Ovary (tissue), 10 donors: ENCODE measurements at regions of chr2 and their contacts with region 1.

Region 1: GRCh38 chr2:71226965-71227560 is at the start of gene PAIP2B:
- DNase-seq: peak; percentile 98 to 99 (median 99)
- H3K4me3 ChIP-seq: peak within 1 kb of the TSS; percentile 73
- H3K27ac ChIP-seq: peak within 1 kb of the TSS; percentile 62 to 90
- H3K4me1 ChIP-seq: peaks cover 1% of the 10 kb centered on the region
- H3K27me3 ChIP-seq: no peaks in the 10 kb centered on the region
- CTCF ChIP-seq: no peak
- EP300 ChIP-seq: no peak
- POLR2A ChIP-seq: peak; percentile 83
- total RNA-seq, gene PAIP2B: 9.0 to 20.7 (median 19.3) TPM

Region 2: DNA sequence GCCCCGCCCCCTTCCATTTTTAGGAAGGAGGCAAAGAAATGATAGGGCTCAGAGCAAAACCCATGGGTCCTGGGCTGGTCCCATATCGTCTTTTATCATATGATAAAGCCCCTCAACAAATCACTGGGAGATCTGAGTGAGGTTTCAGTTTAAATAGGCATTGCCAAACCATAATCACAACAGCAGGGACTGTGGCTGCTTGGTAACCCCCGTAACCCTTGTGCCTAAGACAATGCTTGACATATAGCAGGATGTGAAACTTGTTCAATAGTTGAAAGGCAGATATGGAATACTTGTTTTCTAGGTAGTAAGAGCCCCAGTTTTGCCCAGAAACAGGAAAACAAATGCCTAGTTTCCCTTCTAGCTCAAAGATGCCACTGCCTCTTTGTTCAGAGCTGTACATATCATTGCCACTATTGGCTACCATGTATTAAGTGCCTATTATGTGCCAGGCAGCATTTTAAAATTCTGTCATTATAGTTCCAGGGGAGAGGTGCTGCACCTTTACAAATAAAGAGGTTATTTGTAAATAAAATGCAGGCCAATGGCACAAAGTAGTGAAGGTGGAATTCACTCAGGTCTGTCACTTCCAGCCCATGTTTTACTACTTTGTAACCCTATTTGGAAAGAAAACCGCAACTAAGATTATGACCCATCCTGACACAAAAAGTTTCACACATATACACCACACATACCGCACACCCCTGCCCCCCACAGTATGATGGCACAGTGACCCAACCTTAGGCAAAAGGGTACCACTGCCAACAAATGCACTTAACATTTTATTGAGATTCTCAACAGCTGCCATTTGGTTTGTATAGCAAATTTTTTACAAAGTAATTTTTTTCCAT is 144.4 kb before region 1 on chr2:
- intact Hi-C with region 1: no loop called
- DNase-seq: no peak
- H3K4me3 ChIP-seq: no peak overlapping the region
- H3K27ac ChIP-seq: no peak overlapping the region
- H3K4me1 ChIP-seq: no peaks in the 10 kb centered on the region
- H3K27me3 ChIP-seq: no peaks in the 10 kb centered on the region
- CTCF ChIP-seq: no peak
- EP300 ChIP-seq: no peak
- POLR2A ChIP-seq: no peak

Region 3: GRCh38 chr2:71276311-71277146 is 49.5 kb after region 1 on chr2:
- intact Hi-C with region 1: loop called in 1 of 4 experiments (anchors 1 kb)
- DNase-seq: peak; percentile 62 to 83 (median 68)
- H3K4me3 ChIP-seq: peak overlapping the region; percentile 36
- H3K27ac ChIP-seq: no peak overlapping the region
- H3K4me1 ChIP-seq: no peaks in the 10 kb centered on the region
- H3K27me3 ChIP-seq: no peaks in the 10 kb centered on the region
- CTCF ChIP-seq: no peak
- EP300 ChIP-seq: no peak
- POLR2A ChIP-seq: no peak

Region 4: DNA sequence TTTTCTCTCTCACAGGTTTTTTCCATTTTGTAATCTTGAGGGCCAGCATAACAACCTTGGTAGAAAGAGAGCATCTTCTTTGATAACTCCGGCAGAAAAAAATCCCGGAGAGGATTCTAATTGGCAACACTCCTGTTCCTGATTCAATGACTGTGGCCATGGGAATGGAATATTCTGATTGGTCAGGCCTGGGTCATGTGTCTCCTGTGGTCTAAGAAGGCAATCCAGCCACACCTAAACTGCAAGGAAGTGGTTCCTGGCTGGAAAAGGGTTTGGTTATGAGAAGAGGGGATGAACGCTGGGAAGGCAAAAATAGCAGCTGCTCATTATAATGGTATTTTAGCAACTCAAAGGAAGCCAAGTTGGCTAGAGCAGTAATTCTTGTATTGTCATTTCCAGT is 79.7 kb after region 1 on chr2:
- intact Hi-C with region 1: no loop called
- DNase-seq: no peak
- H3K4me3 ChIP-seq: no peak overlapping the region
- H3K27ac ChIP-seq: no peak overlapping the region
- H3K4me1 ChIP-seq: no peaks in the 10 kb centered on the region
- H3K27me3 ChIP-seq: no peaks in the 10 kb centered on the region
- CTCF ChIP-seq: no peak
- EP300 ChIP-seq: no peak
- POLR2A ChIP-seq: no peak

Region 5: GRCh38 chr2:71331581-71332434 is 104.7 kb after region 1 on chr2 and contains the start of gene ZNF638:
- intact Hi-C with region 1: loop called in 1 of 4 experiments (anchors 10 kb)
- DNase-seq: peak; percentile 91 to 96 (median 93)
- H3K4me3 ChIP-seq: peak within 1 kb of the TSS; percentile 83
- H3K27ac ChIP-seq: peak within 1 kb of the TSS; percentile 86 to 89
- H3K4me1 ChIP-seq: peaks cover 8% of the 10 kb centered on the region
- H3K27me3 ChIP-seq: no peaks in the 10 kb centered on the region
- CTCF ChIP-seq: peak; percentile 53 to 80 (median 71)
- EP300 ChIP-seq: no peak
- POLR2A ChIP-seq: peak; percentile 96
- total RNA-seq, gene ZNF638: 122 to 160 (median 140) TPM

Region 6: GRCh38 chr2:71826826-71827523 is 599.9 kb after region 1 on chr2:
- intact Hi-C with region 1: no loop called
- DNase-seq: no peak
- H3K4me3 ChIP-seq: no peak overlapping the region
- H3K27ac ChIP-seq: no peak overlapping the region
- H3K4me1 ChIP-seq: no peaks in the 10 kb centered on the region
- H3K27me3 ChIP-seq: no peaks in the 10 kb centered on the region
- CTCF ChIP-seq: no peak
- EP300 ChIP-seq: no peak
- POLR2A ChIP-seq: no peak